ENCODE measurements at regions of chr20 and their contacts with region 1.

Region 1: DNA sequence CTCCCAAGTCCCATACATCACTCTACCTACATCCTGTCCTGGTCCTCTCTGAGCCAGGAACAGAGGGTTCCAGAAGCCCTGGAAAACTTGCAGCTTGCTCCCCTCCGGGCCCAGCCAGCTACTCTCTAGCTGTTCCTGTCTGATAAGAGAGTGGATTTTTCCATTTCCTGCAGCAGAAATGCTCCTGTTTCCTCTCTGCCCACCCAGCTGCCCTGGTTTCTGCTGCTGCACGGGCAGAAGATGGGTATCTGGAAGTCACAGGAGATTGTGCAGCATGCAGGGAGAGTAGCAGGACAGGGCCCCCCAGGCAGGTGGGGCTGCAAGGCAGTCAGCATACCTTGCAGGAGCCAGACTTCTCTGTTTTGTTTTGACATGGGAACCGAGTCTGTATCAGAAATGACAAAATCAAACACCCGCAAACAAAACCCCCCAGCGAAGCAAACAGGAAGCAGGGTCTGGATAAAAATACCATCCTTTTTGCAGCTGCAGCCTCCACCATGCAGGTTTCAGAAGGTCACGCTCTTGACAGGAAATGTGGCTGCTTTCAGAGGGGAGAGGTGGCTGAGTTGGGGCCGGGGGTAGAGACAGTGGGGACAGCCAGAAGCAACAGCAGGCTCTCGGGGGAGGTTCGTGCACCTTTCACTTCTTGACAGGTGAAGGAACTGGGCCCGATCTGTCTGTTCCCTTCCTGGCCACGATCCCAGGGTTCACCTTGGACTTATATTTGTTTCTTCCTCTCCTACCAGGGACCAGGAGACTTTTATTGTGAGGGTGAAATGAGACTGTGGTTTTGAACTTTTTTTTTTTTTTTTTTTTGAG is 50.8 kb upstream of the FAM83D start:
- DNase-seq: peak; percentile 70
- H3K4me3 Mint-ChIP-seq: peak overlapping the region; percentile 60
- H3K27ac Mint-ChIP-seq: peak overlapping the region; percentile 96
- H3K4me1 Mint-ChIP-seq: peaks cover 93% of the 10 kb centered on the region
- H3K27me3 Mint-ChIP-seq: no peaks in the 10 kb centered on the region

Region 2: DNA sequence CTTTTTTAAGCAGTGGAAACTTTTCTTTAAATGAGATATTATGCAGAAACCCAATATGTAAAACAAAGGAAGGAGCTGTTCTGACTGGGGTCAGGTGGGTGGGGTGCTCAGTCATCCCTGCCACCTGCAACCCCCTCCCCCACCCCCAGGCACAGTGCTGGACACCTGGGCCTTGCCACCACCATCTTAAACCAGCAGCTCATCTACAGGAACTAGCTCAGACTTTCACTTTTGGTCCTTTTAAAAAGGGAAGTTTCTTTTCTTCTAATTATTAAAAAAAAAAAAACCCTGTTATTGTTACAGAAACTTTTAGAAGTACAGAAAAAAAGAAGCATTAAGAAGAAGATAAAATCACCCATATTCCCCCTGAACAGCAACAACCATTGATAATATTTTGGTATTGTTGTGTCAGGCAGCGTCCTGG is 32.8 kb before region 1 on chr20:
- CTCF ChIA-PET with region 1: no interaction called
- POLR2A ChIA-PET with region 1: interaction called, 60 read pairs
- DNase-seq: peak; percentile 39
- H3K4me3 Mint-ChIP-seq: peak overlapping the region; percentile 8
- H3K27ac Mint-ChIP-seq: peak overlapping the region; percentile 80
- H3K4me1 Mint-ChIP-seq: peaks cover 74% of the 10 kb centered on the region
- H3K27me3 Mint-ChIP-seq: no peaks in the 10 kb centered on the region

Region 3: GRCh38 chr20:38859070-38859690 is 16.2 kb before region 1 on chr20:
- CTCF ChIA-PET with region 1: interaction called, 8 read pairs
- POLR2A ChIA-PET with region 1: interaction called, 26 read pairs
- DNase-seq: no peak
- H3K4me3 Mint-ChIP-seq: no peak overlapping the region
- H3K27ac Mint-ChIP-seq: peak overlapping the region; percentile 50
- H3K4me1 Mint-ChIP-seq: peaks cover 84% of the 10 kb centered on the region
- H3K27me3 Mint-ChIP-seq: no peaks in the 10 kb centered on the region

Region 4: DNA sequence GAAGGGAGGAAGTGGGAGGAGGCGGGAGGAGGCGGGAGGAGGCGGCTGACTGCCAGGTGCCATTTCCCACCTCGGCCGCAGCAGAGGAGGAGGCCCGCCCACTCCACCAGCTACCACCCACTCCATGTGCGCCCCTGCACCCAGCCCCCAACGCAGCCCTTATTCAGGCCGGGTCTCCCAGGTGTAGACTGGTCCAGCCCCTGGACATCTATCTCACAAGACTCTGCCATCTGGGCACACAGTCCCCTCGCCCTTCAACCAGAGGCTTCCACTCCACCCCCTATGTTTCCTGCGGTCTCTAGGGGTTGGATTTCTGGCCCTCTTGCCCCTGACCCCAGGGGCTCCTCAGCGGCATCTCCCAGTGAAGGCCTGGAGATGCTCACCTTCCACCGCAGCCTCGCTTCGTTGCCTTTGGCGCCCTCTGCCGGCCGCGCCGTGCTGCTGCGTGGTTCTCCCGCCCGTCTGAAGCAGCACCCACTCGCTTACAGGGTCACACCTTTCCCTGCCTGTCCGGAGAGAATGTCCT is 18.2 kb after region 1 on chr20:
- CTCF ChIA-PET with region 1: interaction called, 52 read pairs
- POLR2A ChIA-PET with region 1: interaction called, 20 read pairs
- DNase-seq: peak; percentile 81
- H3K4me3 Mint-ChIP-seq: no peak overlapping the region
- H3K27ac Mint-ChIP-seq: peak overlapping the region; percentile 83
- H3K4me1 Mint-ChIP-seq: peaks cover 59% of the 10 kb centered on the region
- H3K27me3 Mint-ChIP-seq: no peaks in the 10 kb centered on the region

Region 5: DNA sequence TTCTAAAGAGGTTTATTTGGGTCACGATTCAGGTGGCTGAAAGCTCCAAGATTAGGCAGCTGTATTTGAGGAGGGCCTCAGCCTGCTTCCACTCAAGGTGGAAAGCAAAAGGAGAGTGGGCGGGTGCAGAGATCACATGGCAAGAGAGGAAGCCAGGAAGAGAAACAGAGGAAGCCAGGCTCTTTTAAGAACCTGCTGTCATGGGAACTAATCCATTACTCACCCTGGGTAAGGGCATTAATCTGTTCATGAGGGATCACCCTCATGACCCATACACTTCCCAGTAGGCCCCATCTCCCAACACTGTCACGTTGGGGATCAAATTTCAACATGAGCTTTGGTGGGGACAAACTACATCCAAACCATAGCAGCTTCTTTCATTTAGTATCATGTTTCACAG is 140.7 kb after region 1 on chr20:
- CTCF ChIA-PET with region 1: no interaction called
- POLR2A ChIA-PET with region 1: no interaction called
- DNase-seq: no peak
- H3K4me3 Mint-ChIP-seq: no peak overlapping the region
- H3K27ac Mint-ChIP-seq: peak overlapping the region; percentile 59
- H3K4me1 Mint-ChIP-seq: peaks cover 50% of the 10 kb centered on the region
- H3K27me3 Mint-ChIP-seq: no peaks in the 10 kb centered on the region